Mucosa of descending colon (tissue), 3 donors: ENCODE measurements at regions of chr5 and their contacts with region 1.

Region 1: DNA sequence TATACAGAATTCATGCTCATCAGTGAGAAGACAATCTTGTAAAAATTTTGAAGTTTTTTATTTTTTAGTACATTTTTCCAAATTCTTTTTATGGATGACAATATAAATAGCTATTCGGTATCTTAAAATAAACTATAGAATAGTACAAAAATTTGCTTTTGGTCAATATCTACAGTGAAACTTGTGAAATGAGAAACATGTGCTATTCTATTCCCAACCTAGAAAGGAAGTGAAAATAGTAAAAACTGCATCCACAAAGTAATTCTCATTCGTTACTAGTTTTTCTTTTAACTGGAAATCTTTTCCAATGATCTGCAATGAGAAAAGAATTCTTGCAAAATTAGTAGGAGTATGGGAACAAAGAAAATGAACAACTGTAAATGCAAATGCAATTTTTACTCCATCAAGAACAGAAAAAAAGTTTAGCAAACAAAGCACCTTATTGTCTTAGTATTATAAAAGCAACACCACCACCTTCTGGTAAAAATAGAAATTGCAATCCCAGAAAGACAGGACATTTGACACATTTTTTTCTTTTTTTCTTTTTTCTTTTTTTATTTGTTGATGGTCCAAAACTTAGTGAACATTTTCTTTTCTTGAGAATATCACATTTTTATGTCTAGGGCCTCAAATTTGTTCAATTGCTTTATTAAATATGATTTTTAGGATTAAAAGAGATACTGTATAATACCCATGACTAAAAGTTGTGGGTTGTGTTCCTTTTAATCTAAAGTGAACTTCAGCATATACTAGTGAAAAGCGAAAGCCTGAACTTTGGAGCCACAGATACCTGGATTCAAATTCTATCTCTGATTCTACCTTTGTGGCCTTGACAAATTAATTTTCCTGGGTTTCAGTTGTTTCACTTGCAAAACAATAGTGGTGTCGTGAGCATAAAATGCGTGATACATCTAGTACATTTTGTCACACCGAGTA is 72.3 kb downstream of the SLCO4C1 start:
- DNase-seq: peak in 1 of 3 donors; percentile 38
- ATAC-seq: peak; percentile 43
- H3K4me3 ChIP-seq: no peak overlapping the region
- H3K4me1 ChIP-seq: no peaks in the 10 kb centered on the region
- CTCF ChIP-seq: peak; percentile 49

Region 2: GRCh38 chr5:101942321-101943215 is 281.2 kb before region 1 on chr5:
- intact Hi-C with region 1: loop called in 1 of 2 experiments (anchors 10 kb)
- DNase-seq: peak in 2 of 3 donors; percentile 28 to 71
- ATAC-seq: peak; percentile 81
- H3K4me3 ChIP-seq: no peak overlapping the region
- H3K4me1 ChIP-seq: no peaks in the 10 kb centered on the region
- CTCF ChIP-seq: peak; percentile 54